ENCODE measurements at regions of chr15 and their contacts with region 1.

Region 1: DNA sequence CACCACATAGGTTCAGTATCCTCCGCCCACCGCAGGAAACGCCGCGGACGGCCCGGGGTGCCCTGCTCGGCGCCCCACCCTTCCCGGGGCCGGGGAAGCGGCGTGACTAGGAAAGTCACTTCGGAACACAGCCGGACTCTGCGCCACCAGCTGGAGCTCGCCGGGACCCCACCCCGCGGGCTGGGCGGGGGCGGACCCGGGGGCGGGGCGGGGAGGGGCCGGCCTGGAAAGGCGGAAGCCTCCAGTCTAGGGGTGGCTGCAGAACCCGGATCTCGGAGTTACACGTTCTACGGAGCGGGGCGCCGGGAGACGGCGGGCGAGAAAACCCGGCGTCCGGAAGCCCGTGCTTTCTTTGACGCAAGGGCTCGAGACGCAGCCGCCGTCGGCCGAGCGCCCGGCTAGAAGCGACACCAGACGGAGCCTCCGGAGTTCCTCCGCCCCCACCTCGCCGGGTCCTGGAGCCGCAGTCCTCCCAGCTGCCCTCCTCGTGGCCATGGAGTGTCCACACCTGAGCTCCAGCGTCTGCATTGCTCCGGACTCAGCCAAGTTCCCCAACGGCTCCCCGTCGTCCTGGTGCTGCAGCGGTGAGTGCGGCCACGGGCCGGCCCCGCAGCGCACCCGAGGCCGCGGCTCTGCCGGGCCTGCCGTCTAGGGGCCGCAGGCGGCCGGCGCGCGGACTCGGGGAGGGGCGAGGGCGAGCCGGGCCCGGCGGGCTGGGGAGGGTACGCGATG is at the start of gene USP3:
- DNase-seq: peak; percentile 67 to 97
- ATAC-seq: peak; percentile 52 to 73
- H3K4me3 ChIP-seq: peak within 1 kb of the TSS; percentile 77
- H3K27ac ChIP-seq: peak within 1 kb of the TSS; percentile 99
- H3K4me1 ChIP-seq: peaks cover 64% of the 10 kb centered on the region
- CTCF ChIP-seq: peak; percentile 30; the same call in 1 of the 3 replicates
- EP300 ChIP-seq: no peak; a peak in 1 of 5 replicates
- POLR2A ChIP-seq: peak; percentile 47
- RAD21 ChIP-seq: peak in 1 of 2 experiments; percentile 73
- polyA plus RNA-seq, gene USP3: 97.4 and 99.1 TPM in 2 replicates

Region 2: DNA sequence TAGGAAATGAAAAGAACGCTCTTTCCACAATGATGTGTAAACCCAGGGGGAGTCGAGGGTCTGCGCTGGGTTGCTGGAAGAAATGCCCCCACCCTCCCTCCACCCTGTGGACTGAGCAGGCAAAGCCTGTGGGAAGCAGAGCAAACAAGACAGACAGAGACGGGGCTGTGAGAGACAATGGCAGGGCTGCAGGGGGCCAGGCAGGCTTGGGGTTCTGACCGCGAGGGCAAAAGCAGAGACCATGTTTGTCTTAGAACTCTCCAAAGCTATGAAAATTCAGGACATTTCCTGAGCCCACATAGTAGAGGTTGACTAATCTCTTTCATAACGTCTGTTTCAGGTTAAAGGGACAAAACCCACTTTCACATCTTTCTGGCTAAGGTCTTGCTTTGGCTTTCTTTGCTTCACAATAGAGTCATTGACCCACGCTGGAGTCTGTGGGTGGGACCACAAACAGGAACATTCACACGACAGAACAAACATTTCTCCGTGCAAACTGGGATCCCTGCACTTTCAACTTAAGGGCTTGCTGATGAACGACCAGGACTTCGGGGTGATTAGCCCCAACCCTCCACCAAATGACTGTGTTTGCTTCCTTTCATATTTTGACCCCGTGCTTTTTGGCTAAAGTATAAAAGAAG is 617.9 kb before region 1 on chr15:
- CTCF ChIA-PET with region 1: no interaction called
- POLR2A ChIA-PET with region 1: no interaction called
- DNase-seq: peak; percentile 41 to 46
- ATAC-seq: peak; percentile 53 to 68; a peak in 5 of 6 replicates
- H3K4me3 ChIP-seq: no peak overlapping the region
- H3K27ac ChIP-seq: peak overlapping the region; percentile 66 to 89
- H3K4me1 ChIP-seq: peaks cover 46% of the 10 kb centered on the region
- CTCF ChIP-seq: no peak
- EP300 ChIP-seq: no peak
- POLR2A ChIP-seq: no peak
- RAD21 ChIP-seq: no peak

Region 3: GRCh38 chr15:63402498-63403253 is 101.7 kb before region 1 on chr15:
- CTCF ChIA-PET with region 1: no interaction called
- POLR2A ChIA-PET with region 1: no interaction called
- DNase-seq: peak; percentile 55 to 57
- ATAC-seq: peak; percentile 79 to 88
- H3K4me3 ChIP-seq: no peak overlapping the region
- H3K27ac ChIP-seq: peak overlapping the region; percentile 36 to 70; a peak in 5 of 6 replicates
- H3K4me1 ChIP-seq: peaks cover 19% of the 10 kb centered on the region; the same call in 2 of the 3 replicates
- CTCF ChIP-seq: peak; percentile 94
- EP300 ChIP-seq: no peak
- POLR2A ChIP-seq: no peak
- RAD21 ChIP-seq: peak; percentile 94 to 97

Region 4: GRCh38 chr15:63481105-63481810 is 23.2 kb before region 1 on chr15:
- CTCF ChIA-PET with region 1: interaction called, 47 read pairs
- POLR2A ChIA-PET with region 1: interaction called, 23 read pairs
- DNase-seq: peak; percentile 54 to 57
- ATAC-seq: peak; percentile 25 to 49; a peak in 5 of 6 replicates
- H3K4me3 ChIP-seq: no peak overlapping the region
- H3K27ac ChIP-seq: peak overlapping the region; percentile 50 to 70
- H3K4me1 ChIP-seq: peaks cover 86% of the 10 kb centered on the region
- CTCF ChIP-seq: no peak
- EP300 ChIP-seq: no peak
- POLR2A ChIP-seq: no peak
- RAD21 ChIP-seq: no peak

Region 5: DNA sequence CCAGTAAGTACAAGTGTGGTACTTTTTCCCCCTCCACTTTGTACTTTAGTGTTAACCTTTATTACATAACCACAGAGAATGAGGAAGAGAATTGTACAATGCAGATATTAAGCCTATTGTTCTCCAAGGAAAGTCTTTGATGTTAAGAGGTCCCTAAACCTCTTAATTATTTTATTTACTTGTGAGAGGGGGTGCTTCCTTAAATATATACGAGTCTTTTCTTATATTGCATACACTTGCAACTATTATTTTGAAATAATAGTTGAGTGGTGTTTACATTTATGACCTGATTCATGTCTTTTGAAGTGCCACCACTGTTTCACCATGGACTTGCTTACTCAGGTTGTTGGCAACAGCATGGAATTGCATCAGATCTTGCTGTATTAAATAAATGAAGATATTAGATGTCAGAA is 10.1 kb after region 1 on chr15:
- CTCF ChIA-PET with region 1: interaction called, 14 read pairs
- POLR2A ChIA-PET with region 1: interaction called, 16 read pairs
- DNase-seq: peak; percentile 57 to 86
- ATAC-seq: peak; percentile 60 to 87
- H3K4me3 ChIP-seq: peak overlapping the region; percentile 30
- H3K27ac ChIP-seq: peak overlapping the region; percentile 77 to 78
- H3K4me1 ChIP-seq: peaks cover 94% of the 10 kb centered on the region
- CTCF ChIP-seq: no peak
- EP300 ChIP-seq: peak; percentile 86 to 89; a peak in 3 of 5 replicates
- POLR2A ChIP-seq: no peak
- RAD21 ChIP-seq: 0 out of 5 replicates have a peak, but pooled peaks of 1 of the 2 experiments have one; percentile 22

Region 6: DNA sequence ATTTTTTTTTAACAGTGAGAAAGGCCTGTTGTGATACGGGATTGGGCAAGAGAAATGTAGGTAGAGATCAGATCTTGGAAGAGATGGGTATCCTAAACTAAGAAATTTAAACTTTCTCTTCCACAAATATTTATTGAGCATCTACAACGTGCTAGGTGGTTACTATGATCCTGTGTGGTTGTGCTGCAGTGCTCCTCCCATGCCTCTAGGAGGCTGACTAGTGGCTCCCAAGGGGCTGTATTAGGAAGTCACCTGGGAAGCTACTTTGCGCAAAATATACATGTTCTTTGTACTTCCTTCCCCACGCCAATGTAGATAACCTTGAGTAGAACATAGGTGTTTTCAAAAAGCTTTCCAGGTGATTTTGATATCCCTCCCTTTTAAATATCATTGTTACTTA is 27.2 kb after region 1 on chr15:
- CTCF ChIA-PET with region 1: interaction called, 24 read pairs
- POLR2A ChIA-PET with region 1: no interaction called
- DNase-seq: peak in 1 of 2 experiments; percentile 30
- ATAC-seq: peak; percentile 79 to 84; a peak in 5 of 6 replicates
- H3K4me3 ChIP-seq: no peak overlapping the region
- H3K27ac ChIP-seq: no peak overlapping the region
- H3K4me1 ChIP-seq: peaks cover 40% of the 10 kb centered on the region
- CTCF ChIP-seq: no peak
- EP300 ChIP-seq: no peak
- POLR2A ChIP-seq: no peak
- RAD21 ChIP-seq: peak in 1 of 2 experiments; percentile 20; a peak in 1 of 5 replicates

Region 7: GRCh38 chr15:63718590-63719035 is 214.2 kb after region 1 on chr15:
- CTCF ChIA-PET with region 1: no interaction called
- POLR2A ChIA-PET with region 1: no interaction called
- DNase-seq: peak in 1 of 2 experiments; percentile 59
- ATAC-seq: peak; percentile 70 to 87; a peak in 5 of 6 replicates
- H3K4me3 ChIP-seq: no peak overlapping the region
- H3K27ac ChIP-seq: peak overlapping the region in 1 of 2 experiments; percentile 10; a peak in 1 of 6 replicates
- H3K4me1 ChIP-seq: peaks cover 35% of the 10 kb centered on the region
- CTCF ChIP-seq: no peak
- EP300 ChIP-seq: peak; percentile 16 to 37; a peak in 1 of 5 replicates
- POLR2A ChIP-seq: no peak
- RAD21 ChIP-seq: no peak

Measured in A549 (cell line).